ENCODE measurements at regions of chr2 and their contacts with region 1.

Region 1: GRCh38 chr2:199979832-199980628 is 24.6 kb downstream of the MAIP1 start:
- DNase-seq: peak; percentile 87
- H3K4me3 ChIP-seq: peak overlapping the region in 2 of 4 donors; percentile 11 to 21
- H3K27ac ChIP-seq: no peak overlapping the region
- H3K4me1 ChIP-seq: peaks cover 0 to 7% (median 6%) of the 10 kb centered on the region in 4 donors
- H3K27me3 ChIP-seq: no peaks in the 10 kb centered on the region
- CTCF ChIP-seq: peak; percentile 64 to 83 (median 79)
- EP300 ChIP-seq: no peak
- POLR2A ChIP-seq: no peak

Region 2: DNA sequence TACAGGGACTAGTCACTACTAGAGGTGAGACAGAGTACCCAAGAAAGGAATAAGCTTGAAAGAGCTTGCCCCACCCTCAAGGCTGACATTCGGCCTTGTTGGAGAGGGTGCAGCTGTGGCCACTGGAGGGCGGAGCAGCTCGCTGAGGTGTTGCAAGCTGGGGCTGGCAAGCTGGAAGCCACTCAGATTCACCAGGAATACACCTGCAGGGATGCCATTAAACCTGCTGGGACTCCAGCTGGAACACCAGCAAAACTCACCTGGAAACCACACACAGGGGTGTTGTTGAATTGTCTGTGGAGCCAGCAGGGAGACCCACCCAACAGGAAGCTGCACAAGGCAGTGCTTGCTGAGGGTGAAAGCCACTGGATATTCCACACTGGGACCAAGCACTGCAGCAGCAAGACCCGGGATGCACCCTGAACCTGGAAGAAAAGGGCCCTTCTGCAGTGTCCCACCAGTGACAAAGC is 503.7 kb after region 1 on chr2:
- intact Hi-C with region 1: loop called (anchors 1 kb)
- DNase-seq: no peak
- H3K4me3 ChIP-seq: no peak overlapping the region
- H3K27ac ChIP-seq: no peak overlapping the region
- H3K4me1 ChIP-seq: peaks cover 0 to 29% (median 19%) of the 10 kb centered on the region in 4 donors
- H3K27me3 ChIP-seq: no peaks in the 10 kb centered on the region
- CTCF ChIP-seq: peak in 1 of 4 experiments; percentile 17
- EP300 ChIP-seq: no peak
- POLR2A ChIP-seq: no peak

Measured in sigmoid colon (tissue), 7 donors.